HCT116 (cell line): ENCODE measurements at regions of chr1 and their contacts with region 1.

Region 1: DNA sequence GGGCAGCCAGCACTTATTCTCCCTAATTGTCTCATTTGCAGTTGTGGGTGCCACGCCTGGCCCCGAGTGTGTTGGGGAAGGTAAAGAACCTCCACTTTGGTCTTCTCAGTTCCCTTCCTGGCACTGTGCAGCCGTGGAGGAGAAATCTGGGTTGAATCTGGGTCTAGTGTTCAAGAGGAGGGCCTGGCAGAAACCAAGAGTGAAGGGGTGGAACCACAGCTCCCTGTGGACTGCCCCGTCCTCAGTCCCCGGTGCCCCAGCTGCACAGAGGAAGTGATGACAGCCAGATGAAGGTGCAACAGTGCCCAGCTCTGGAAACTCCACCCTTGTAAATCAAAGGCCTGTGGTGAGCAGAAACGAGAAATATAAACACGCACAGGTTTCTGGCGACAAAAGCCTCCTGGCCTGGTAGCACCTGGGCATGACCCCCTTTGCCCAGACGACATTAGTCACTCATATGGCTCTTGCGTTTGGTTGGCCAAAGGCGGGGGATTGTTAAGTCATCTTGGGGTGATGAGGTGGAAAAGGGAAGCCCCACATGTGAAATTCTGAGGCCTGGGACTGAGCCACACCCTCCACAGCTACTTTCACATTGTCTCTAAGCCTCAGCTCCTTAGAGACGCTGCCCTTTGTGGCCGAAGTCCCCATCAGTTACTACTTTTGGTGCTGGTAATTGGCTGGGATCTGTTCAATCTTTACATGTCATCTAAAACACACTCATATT is 4.2 kb upstream of the ECE1 start:
- DNase-seq: peak; percentile 47
- ATAC-seq: peak; percentile 57
- H3K4me3 ChIP-seq: peak overlapping the region in 1 of 2 experiments; percentile 29; a peak in 2 of 4 replicates
- H3K27ac ChIP-seq: peak overlapping the region; percentile 42
- H3K4me1 ChIP-seq: peaks cover 45 to 85% of the 10 kb centered on the region in 2 experiments
- H3K27me3 ChIP-seq: no peaks in the 10 kb centered on the region
- CTCF ChIP-seq: no peak
- POLR2A ChIP-seq: no peak
- RAD21 ChIP-seq: no peak

Region 2: GRCh38 chr1:21324368-21325141 is 30.1 kb after region 1 on chr1:
- CTCF ChIA-PET with region 1: interaction called, 6 read pairs
- POLR2A ChIA-PET with region 1: interaction called, 3 read pairs
- RAD21 ChIA-PET with region 1: interaction called in 1 of 2 experiments, 5 read pairs
- intact Hi-C with region 1: loop called (anchors 1 kb)
- DNase-seq: peak; percentile 94
- ATAC-seq: peak; percentile 90
- H3K4me3 ChIP-seq: peak overlapping the region; percentile 20 to 42
- H3K27ac ChIP-seq: peak overlapping the region; percentile 84
- H3K4me1 ChIP-seq: peaks cover 73 to 94% of the 10 kb centered on the region in 2 experiments
- H3K27me3 ChIP-seq: no peaks in the 10 kb centered on the region
- CTCF ChIP-seq: no peak
- POLR2A ChIP-seq: no peak
- RAD21 ChIP-seq: no peak

Region 3: DNA sequence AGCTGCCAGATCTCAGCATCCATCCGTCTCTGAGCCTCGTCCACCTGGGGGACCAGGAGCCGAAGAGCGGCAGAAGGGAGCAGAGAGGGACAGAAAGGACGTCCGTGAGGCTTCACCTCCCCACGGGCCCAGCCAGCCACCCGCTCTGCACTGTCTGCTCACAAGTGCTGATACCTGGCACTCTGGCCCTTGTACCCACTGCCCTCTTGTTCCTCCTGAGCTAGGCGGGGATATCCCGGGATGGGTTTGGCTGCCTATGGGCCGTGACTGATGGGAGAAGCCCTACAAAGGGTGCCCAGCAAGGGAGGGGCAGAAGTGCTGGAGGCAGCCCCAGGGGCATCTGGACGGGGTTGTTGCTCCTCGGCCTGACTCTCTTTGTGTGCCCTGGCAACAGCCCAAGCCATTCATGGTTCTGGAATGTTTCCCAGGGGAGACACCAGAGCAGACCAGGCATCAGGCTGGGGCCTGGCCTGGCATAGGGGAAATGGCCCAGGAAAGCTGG is 575.2 kb after region 1 on chr1:
- CTCF ChIA-PET with region 1: no interaction called
- POLR2A ChIA-PET with region 1: no interaction called
- RAD21 ChIA-PET with region 1: no interaction called
- intact Hi-C with region 1: no loop called
- DNase-seq: peak; percentile 18
- ATAC-seq: peak; percentile 71
- H3K4me3 ChIP-seq: no peak overlapping the region
- H3K27ac ChIP-seq: no peak overlapping the region
- H3K4me1 ChIP-seq: peaks cover 20 to 30% of the 10 kb centered on the region in 2 experiments
- H3K27me3 ChIP-seq: no peaks in the 10 kb centered on the region
- CTCF ChIP-seq: no peak
- POLR2A ChIP-seq: no peak
- RAD21 ChIP-seq: no peak